Mammary epithelial cell (primary cell): ENCODE measurements at regions of chr3 and their contacts with region 1.

Region 1: DNA sequence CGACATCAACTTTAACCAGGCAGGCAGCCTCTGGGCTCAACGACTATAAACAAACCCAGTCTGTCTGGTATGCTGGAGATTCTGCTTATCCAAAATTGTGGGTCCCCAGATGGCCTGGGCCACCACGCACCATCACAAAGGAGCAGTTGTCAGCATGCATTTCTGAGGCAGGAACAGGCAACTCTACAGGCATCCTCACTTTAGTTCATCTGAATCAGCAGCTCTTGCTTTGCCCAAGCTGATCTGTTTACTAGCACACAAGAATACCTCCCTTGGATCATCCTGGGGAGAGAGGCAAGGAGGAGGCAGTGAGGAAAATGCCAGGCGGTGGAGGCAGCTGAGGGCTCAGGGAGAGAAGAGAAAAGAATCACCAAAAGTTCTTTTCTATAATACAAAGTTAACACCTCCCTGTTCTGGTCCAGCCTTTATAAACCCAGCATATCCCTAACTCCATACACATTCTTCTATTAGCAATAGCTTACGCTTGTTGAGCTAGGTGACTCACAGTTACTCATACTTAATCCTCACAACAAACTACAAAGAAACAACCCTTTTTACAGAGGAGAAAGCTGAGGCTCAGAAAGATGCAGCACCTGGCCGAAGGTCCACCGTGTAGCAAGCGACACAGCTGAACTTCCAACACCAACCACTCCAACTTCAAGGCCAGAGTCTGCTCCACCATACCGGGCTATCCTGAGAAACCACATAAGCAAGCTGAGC is 33.6 kb downstream of the ZDHHC3 start:
- DNase-seq: peak; percentile 71
- H3K4me3 ChIP-seq: no peak overlapping the region
- H3K27ac ChIP-seq: peak overlapping the region; percentile 36
- H3K4me1 ChIP-seq: peaks cover 8% of the 10 kb centered on the region
- H3K27me3 ChIP-seq: no peaks in the 10 kb centered on the region
- CTCF ChIP-seq: no peak

Region 2: DNA sequence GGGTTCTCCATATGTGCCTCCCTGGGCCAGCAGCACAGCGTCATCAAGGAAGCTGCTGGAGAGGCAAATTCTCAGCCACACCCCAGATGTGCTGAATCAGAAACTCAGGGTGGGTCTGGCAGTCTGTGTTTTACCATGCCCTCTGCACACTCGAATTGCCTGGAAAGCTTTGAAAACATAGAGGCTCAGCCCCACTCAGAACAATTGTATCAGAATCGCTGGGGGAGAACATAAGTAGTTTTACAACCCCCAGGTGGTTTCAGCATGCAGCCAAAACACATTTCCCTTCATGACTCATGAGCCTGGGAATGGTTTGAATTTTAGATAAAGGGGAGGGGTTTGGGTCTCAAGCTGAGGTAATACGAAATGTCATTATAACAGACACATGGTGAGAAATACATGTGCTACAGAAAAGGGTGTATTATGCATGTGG is 58.3 kb before region 1 on chr3:
- CTCF ChIA-PET with region 1: no interaction called
- dilution Hi-C with region 1: no loop called
- in situ Hi-C with region 1: no loop called
- intact Hi-C with region 1: no loop called
- DNase-seq: peak; percentile 97
- H3K4me3 ChIP-seq: no peak overlapping the region
- H3K27ac ChIP-seq: peak overlapping the region; percentile 92
- H3K4me1 ChIP-seq: peaks cover 55% of the 10 kb centered on the region
- H3K27me3 ChIP-seq: no peaks in the 10 kb centered on the region
- CTCF ChIP-seq: no peak

Region 3: DNA sequence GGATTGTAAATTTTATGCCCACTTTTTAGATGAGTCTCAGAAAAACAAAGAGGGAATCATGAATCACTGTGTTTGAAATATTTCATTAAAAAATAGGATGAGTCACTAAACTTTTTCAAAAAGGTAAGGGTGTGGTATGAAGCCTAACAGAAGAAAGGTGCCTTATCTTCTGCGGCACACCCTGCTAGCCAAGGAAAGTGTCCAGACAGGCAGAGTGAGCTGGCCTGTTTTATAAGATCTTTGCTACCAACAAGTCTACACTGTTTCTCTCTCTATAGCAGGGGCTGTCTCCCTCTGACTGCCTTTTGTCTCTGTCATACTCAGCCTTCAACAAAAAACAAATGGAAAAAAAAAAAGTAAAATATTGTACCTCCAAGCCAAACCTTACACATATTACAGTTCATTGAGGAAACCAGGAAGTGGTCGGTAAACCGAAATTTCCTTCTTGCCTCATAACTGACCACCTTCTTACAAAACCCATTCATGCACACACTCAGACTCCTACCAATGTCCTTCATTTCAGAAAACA is 24.5 kb after region 1 on chr3:
- CTCF ChIA-PET with region 1: no interaction called
- dilution Hi-C with region 1: no loop called
- in situ Hi-C with region 1: no loop called
- intact Hi-C with region 1: loop called (anchors 2 kb)
- DNase-seq: peak; percentile 99
- H3K4me3 ChIP-seq: peak overlapping the region in 1 of 3 experiments; percentile 14
- H3K27ac ChIP-seq: peak overlapping the region; percentile 93
- H3K4me1 ChIP-seq: peaks cover 85% of the 10 kb centered on the region
- H3K27me3 ChIP-seq: no peaks in the 10 kb centered on the region
- CTCF ChIP-seq: no peak

Region 4: DNA sequence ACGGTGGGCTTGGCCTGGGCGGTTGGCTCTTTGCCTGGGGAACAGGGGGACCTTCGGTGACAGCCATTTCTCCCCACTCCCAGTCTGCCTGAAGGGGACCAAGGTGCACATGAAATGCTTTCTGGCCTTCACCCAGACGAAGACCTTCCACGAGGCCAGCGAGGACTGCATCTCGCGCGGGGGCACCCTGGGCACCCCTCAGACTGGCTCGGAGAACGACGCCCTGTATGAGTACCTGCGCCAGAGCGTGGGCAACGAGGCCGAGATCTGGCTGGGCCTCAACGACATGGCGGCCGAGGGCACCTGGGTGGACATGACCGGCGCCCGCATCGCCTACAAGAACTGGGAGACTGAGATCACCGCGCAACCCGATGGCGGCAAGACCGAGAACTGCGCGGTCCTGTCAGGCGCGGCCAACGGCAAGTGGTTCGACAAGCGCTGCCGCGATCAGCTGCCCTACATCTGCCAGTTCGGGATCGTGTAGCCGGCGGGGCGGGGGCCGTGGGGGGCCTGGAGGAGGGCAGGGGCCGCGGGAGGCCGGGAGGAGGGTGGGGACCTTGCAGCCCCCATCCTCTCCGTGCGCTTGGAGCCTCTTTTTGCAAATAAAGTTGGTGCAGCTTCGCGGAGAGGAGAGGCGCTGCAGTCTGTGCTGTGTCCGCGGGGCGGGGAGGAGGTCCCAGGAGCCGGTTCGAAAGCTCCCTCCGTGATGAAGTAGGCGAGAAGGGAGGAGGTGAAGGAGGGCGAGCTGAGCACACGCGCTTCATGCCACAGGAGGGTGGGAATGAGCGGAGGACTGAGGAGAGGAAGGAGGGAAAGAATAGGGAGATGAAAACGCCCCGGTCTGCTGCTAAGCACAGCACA is 93.3 kb after region 1 on chr3:
- CTCF ChIA-PET with region 1: no interaction called
- dilution Hi-C with region 1: no loop called
- in situ Hi-C with region 1: no loop called
- intact Hi-C with region 1: no loop called
- DNase-seq: no peak
- H3K4me3 ChIP-seq: no peak overlapping the region
- H3K27ac ChIP-seq: no peak overlapping the region
- H3K4me1 ChIP-seq: peaks cover 21% of the 10 kb centered on the region
- H3K27me3 ChIP-seq: no peaks in the 10 kb centered on the region
- CTCF ChIP-seq: no peak